ENCODE measurements at regions of chr22 and their contacts with region 1.

Region 1: DNA sequence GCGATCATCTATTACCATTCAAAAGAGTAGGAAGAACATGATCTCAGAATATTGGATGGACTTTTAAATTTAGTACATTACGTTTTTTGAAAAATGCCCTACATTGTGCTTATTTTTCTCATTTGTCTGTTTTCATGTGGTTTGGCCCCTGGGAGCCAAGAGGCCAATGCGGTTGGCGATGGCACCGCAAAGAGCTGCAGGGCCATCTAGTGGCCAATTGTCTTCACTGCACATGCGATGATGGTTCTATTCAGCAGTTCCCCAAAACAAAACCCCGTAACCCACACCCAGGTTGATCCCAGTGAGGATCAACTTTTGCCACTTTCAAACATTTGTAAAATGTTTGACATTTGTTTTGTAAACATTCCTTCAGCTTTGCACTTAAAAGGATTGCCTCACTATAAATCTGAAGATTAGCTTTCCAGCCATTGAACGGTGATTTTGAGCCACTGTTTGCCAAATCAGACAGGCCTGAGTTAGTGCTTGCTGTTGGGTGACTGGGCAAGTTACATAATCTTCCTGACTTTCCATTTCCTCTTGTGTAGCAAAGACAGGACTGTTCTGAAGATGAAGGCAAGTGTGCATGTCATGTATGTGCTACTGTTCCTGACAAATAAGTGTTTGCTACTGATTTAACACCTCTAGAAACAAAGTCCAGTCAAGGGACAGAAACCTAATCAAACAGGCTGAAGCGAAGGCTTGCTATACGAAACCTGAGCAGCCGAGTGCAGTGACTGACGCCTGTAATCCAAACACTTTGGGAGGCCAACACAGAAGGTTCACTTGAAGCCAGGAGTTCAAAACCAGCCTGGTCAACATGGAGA is 29.2 kb upstream of the XBP1 start:
- DNase-seq: peak; percentile 51
- ATAC-seq: peak; percentile 80
- H3K4me3 Mint-ChIP-seq: no peak overlapping the region
- H3K27ac Mint-ChIP-seq: no peak overlapping the region
- H3K4me1 Mint-ChIP-seq: peaks cover 5% of the 10 kb centered on the region
- H3K27me3 Mint-ChIP-seq: no peaks in the 10 kb centered on the region
- CTCF ChIP-seq: peak; percentile 89

Region 2: GRCh38 chr22:28019881-28020871 is 809.4 kb before region 1 on chr22:
- CTCF ChIA-PET with region 1: interaction called, 7 read pairs
- POLR2A ChIA-PET with region 1: interaction called, 4 read pairs
- intact Hi-C with region 1: loop called (anchors 1 kb)
- DNase-seq: peak; percentile 58
- ATAC-seq: peak; percentile 96
- H3K4me3 Mint-ChIP-seq: no peak overlapping the region
- H3K27ac Mint-ChIP-seq: no peak overlapping the region
- H3K4me1 Mint-ChIP-seq: peaks cover 2% of the 10 kb centered on the region
- H3K27me3 Mint-ChIP-seq: no peaks in the 10 kb centered on the region
- CTCF ChIP-seq: no peak

Region 3: GRCh38 chr22:28600546-28601143 is 228.9 kb before region 1 on chr22:
- CTCF ChIA-PET with region 1: interaction called, 155 read pairs
- POLR2A ChIA-PET with region 1: interaction called, 6 read pairs
- intact Hi-C with region 1: loop called (anchors 1 kb)
- DNase-seq: no peak
- ATAC-seq: no peak
- H3K4me3 Mint-ChIP-seq: no peak overlapping the region
- H3K27ac Mint-ChIP-seq: no peak overlapping the region
- H3K4me1 Mint-ChIP-seq: no peaks in the 10 kb centered on the region
- H3K27me3 Mint-ChIP-seq: peaks cover 5% of the 10 kb centered on the region
- CTCF ChIP-seq: peak; percentile 34

Region 4: GRCh38 chr22:28772633-28773460 is 56.7 kb before region 1 on chr22 and contains the start of gene CCDC117:
- CTCF ChIA-PET with region 1: interaction called, 8 read pairs
- POLR2A ChIA-PET with region 1: no interaction called
- intact Hi-C with region 1: loop called (anchors 1 kb)
- DNase-seq: peak; percentile 87
- ATAC-seq: peak; percentile 91
- H3K4me3 Mint-ChIP-seq: peak within 1 kb of the TSS; percentile 91
- H3K27ac Mint-ChIP-seq: peak within 1 kb of the TSS; percentile 91
- H3K4me1 Mint-ChIP-seq: peaks cover 28% of the 10 kb centered on the region
- H3K27me3 Mint-ChIP-seq: no peaks in the 10 kb centered on the region
- CTCF ChIP-seq: no peak
- total RNA-seq, gene CCDC117: 16.3 and 21.9 TPM in 2 replicates

Region 5: DNA sequence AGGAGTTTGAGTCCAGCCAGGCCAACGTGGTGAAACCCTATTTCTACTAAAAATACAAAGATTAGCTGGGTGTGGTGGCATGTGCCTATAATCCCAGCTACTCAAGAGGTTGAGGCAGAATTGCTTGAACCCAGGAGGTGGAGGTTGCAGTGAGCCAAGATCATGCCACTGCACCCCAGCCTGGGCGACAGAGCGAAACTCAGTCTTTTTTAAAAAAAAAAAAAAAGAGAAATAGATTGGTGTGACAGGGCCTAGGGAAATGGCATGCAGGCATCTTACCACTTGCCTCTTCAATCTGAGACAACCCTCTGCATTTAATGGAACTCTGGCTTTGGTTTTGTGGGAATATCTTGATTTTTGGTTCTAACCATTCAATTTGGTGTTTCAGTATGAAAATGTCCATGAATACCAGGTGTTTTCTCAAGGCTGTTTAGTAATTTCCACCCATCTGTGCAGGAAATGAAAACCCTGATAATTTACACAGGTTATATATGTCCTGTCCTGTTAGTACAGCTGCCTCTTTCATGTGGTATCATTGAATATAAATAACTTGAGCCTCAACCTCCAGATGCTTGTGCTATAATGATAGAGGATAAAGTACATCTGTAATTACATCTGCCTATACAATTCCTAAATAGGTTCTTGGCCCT is 37.6 kb before region 1 on chr22:
- CTCF ChIA-PET with region 1: interaction called, 10 read pairs
- POLR2A ChIA-PET with region 1: no interaction called
- intact Hi-C with region 1: loop called (anchors 1 kb)
- DNase-seq: no peak
- ATAC-seq: peak; percentile 66
- H3K4me3 Mint-ChIP-seq: no peak overlapping the region
- H3K27ac Mint-ChIP-seq: peak overlapping the region; percentile 69
- H3K4me1 Mint-ChIP-seq: peaks cover 54% of the 10 kb centered on the region
- H3K27me3 Mint-ChIP-seq: no peaks in the 10 kb centered on the region
- CTCF ChIP-seq: no peak

Region 6: GRCh38 chr22:29040385-29041275 is 211.1 kb after region 1 on chr22:
- CTCF ChIA-PET with region 1: interaction called, 11 read pairs
- POLR2A ChIA-PET with region 1: no interaction called
- intact Hi-C with region 1: no loop called
- DNase-seq: no peak
- ATAC-seq: peak; percentile 61
- H3K4me3 Mint-ChIP-seq: no peak overlapping the region
- H3K27ac Mint-ChIP-seq: no peak overlapping the region
- H3K4me1 Mint-ChIP-seq: no peaks in the 10 kb centered on the region
- H3K27me3 Mint-ChIP-seq: peaks cover 3% of the 10 kb centered on the region
- CTCF ChIP-seq: no peak

Measured in activated B cell treated with CpG ODN at 0.5 μM for 24 hours (primary cell).